Activated CD4-positive, alpha-beta memory T cell treated with anti-CD3 and anti-CD28 coated beads for 36 hours (primary cell): ENCODE measurements at regions of chr12 and their contacts with region 1.

Region 1: GRCh38 chr12:96263449-96263902 is 69.3 kb downstream of the ELK3 start:
- DNase-seq: no peak
- H3K4me3 Mint-ChIP-seq: no peak overlapping the region
- H3K27ac Mint-ChIP-seq: peak overlapping the region; percentile 6
- H3K4me1 Mint-ChIP-seq: peaks cover 29% of the 10 kb centered on the region
- H3K27me3 Mint-ChIP-seq: no peaks in the 10 kb centered on the region

Region 2: DNA sequence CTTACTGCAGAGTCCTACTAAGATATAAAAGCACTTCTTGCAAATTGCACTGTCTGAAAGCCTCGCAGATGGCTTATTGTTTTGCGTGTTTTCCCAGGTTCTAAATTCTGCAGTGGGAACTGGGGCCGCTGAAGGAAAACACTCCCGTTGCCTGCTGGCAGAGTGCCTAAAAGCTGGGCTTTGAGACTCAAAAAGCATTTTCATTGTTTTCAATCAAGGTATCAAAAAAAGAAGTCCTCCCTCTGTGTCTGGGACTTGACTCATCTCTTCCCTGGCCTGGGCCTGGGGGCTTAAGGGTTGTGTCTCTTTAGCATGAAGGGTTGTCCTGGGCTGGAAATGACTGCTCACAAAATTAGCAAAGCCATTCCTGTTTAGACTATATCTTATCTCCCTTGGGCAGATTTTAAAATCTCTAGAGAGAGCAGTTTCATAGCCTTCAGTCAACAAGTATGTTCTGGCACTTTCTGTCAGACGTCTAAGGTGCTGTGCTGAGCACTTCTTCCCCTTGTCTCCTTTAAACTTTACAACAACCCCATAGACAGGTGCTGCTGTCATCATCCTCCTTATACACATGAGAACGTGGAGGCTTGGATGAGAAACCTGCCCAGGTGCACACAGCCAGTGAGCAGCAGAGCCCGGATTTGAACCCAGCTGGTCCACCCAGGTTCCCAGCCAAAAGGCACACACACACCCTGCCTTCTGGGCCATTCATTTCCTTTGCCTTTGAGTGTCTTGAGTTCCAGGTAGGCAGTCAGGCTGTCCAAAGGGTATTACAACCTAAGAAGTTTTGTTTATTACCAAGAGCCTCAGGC is 38.2 kb before region 1 on chr12:
- CTCF ChIA-PET with region 1: no interaction called
- POLR2A ChIA-PET with region 1: no interaction called
- intact Hi-C with region 1: loop called (anchors 2 kb)
- DNase-seq: no peak
- H3K4me3 Mint-ChIP-seq: no peak overlapping the region
- H3K27ac Mint-ChIP-seq: no peak overlapping the region
- H3K4me1 Mint-ChIP-seq: peaks cover 50% of the 10 kb centered on the region
- H3K27me3 Mint-ChIP-seq: no peaks in the 10 kb centered on the region